Mucosa of descending colon (tissue), 3 donors: ENCODE measurements at regions of chr17 and their contacts with region 1.

Region 1: DNA sequence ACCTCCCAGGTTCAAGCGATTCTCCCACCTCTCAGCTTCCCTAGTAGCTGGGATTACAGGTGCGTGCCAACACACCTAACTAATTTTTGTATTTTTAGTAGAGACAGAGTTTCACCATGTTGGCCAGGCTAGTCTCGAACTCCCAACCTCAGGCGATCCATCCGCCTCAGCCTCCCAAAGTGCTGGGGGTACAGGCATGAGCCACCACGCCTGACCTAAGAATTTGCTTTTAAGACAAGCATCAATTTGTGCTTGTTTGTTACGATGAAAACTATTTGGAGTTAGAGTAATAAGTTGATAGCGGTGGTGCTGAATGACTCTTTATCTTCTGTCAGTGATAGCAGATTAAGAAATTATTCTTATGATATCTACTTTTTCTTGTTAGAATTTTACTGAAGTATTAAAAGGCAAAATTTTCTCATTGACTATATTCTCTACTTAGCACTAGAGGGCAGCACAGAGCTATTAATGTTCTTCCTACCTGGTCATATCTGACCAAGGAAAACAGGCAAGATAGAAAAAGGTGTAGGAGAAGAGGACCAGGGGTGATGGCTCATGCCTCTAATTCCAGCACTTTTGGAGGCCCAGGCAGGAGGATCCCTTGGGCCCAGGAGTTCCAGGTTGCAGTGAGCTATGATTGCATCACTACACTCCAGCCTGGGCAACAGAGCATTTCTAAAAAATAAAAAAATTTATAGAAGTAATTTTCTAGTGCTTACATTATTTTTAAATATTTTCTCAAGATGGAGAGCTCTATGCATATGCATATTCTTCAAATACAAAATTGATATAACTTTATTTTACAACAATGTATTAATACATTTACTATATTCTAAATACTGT is 24.5 kb downstream of the STXBP4 start:
- DNase-seq: peak in 1 of 3 donors; percentile 15
- ATAC-seq: peak; percentile 81
- H3K4me3 ChIP-seq: no peak overlapping the region
- H3K4me1 ChIP-seq: no peaks in the 10 kb centered on the region
- CTCF ChIP-seq: peak; percentile 27

Region 2: GRCh38 chr17:54864636-54865356 is 128.2 kb before region 1 on chr17:
- intact Hi-C with region 1: no loop called
- DNase-seq: no peak
- ATAC-seq: no peak
- H3K4me3 ChIP-seq: no peak overlapping the region
- H3K4me1 ChIP-seq: no peaks in the 10 kb centered on the region
- CTCF ChIP-seq: no peak

Region 3: DNA sequence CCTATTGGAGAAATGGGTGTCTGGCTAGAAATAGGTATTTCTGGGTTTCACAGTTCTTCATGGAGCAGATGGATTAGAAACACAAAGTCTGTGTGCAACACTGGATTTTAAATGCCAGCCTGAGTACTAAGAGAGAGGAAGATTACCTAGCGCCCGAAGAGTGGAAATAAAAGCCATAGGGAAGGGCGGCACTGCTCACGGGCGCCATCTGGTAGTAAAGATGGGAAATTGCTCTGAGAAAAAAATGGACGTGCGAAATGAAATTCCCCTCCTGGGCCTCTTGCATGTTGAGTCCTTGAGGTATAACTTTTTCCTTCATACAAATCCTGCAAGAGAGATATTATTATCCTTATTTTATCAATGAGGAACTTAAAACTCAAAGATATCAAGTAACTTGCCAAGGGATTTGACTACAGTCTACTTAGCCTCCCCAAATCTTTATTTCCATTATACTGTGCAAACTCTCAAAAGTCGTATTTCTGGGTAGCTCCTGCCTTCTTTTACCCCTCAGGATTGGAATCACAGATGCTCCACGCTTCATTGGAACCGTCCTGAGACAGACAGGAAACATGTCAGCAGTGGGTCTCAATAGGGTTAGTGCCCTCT is 355.8 kb after region 1 on chr17:
- intact Hi-C with region 1: loop called in 1 of 2 experiments (anchors 10 kb)
- DNase-seq: peak in 2 of 3 donors; percentile 44 to 57
- ATAC-seq: peak; percentile 82
- H3K4me3 ChIP-seq: no peak overlapping the region
- H3K4me1 ChIP-seq: no peaks in the 10 kb centered on the region
- CTCF ChIP-seq: peak; percentile 72